ENCODE measurements at regions of chr1 and their contacts with region 1.

Region 1: GRCh38 chr1:109499661-109500536 is 6.0 kb downstream of the CYB561D1 start:
- DNase-seq: peak in 1 of 3 donors; percentile 62
- ATAC-seq: peak in 1 of 2 donors; percentile 7
- H3K4me3 ChIP-seq: no peak overlapping the region
- H3K27ac ChIP-seq: no peak overlapping the region
- H3K4me1 ChIP-seq: no peaks in the 10 kb centered on the region
- H3K27me3 ChIP-seq: no peaks in the 10 kb centered on the region

Region 2: GRCh38 chr1:109527098-109527811 is 27.4 kb after region 1 on chr1:
- intact Hi-C with region 1: loop called in 2 of 4 experiments (anchors 2 kb)
- DNase-seq: no peak
- ATAC-seq: no peak
- H3K4me3 ChIP-seq: no peak overlapping the region
- H3K27ac ChIP-seq: no peak overlapping the region
- H3K4me1 ChIP-seq: no peaks in the 10 kb centered on the region
- H3K27me3 ChIP-seq: no peaks in the 10 kb centered on the region

Region 3: GRCh38 chr1:109546311-109547109 is 46.6 kb after region 1 on chr1:
- intact Hi-C with region 1: no loop called
- DNase-seq: peak; percentile 87 to 92 (median 90)
- ATAC-seq: peak; percentile 69 to 73
- H3K4me3 ChIP-seq: peak overlapping the region; percentile 25
- H3K27ac ChIP-seq: peak overlapping the region; percentile 70
- H3K4me1 ChIP-seq: peaks cover 3% of the 10 kb centered on the region
- H3K27me3 ChIP-seq: no peaks in the 10 kb centered on the region

Region 4: DNA sequence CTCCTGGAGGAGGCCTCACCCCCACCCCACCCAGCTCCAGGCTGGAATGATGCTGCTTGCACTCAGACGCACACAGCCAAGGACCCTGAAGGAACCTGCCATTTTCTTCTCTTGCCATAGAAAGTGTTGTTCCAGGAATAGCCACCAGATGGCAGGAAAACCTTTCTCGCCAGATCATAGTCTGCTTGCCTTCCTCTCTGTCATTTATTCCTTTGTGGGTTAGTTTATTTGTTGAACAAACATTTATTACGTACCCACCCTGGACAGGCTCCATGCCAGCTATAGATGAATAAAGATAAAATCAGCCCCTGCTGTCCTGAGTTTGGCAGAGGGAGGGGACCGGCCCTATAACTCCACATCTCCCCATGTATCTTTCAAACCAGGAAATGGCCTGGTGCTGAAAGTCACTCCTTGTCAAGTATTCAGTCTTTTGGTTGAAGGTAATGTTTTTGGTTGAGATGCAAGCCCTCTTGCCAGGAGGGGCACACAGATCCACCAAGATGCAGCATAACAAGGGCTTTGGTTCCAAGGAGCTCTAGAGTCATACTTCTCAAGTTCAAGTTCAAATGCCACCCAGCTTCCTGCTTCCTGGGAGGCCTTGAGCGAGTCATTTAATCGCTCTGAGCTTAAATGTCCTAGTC is 703.2 kb after region 1 on chr1:
- intact Hi-C with region 1: no loop called
- DNase-seq: peak in 1 of 3 donors; percentile 46
- ATAC-seq: peak; percentile 28 to 61
- H3K4me3 ChIP-seq: no peak overlapping the region
- H3K27ac ChIP-seq: no peak overlapping the region
- H3K4me1 ChIP-seq: no peaks in the 10 kb centered on the region
- H3K27me3 ChIP-seq: no peaks in the 10 kb centered on the region

Measured in right cardiac atrium (tissue), 5 donors.